GM12878 (cell line): ENCODE measurements at regions of chr6 and their contacts with region 1.

Region 1: GRCh38 chr6:151690768-151691562 is 116.5 kb upstream of the ESR1 start:
- DNase-seq: peak; percentile 83
- ATAC-seq: peak; percentile 97
- H3K4me3 ChIP-seq: peak overlapping the region; percentile 31; the same call in 1 of the 2 replicates
- H3K27ac ChIP-seq: no peak overlapping the region; the same call in 1 of the 2 replicates
- H3K4me1 ChIP-seq: peaks cover 17% of the 10 kb centered on the region
- H3K27me3 ChIP-seq: no peaks in the 10 kb centered on the region
- CTCF ChIP-seq: no peak
- EP300 ChIP-seq: peak; percentile 94 to 98
- POLR2A ChIP-seq: no peak
- RAD21 ChIP-seq: no peak

Region 2: DNA sequence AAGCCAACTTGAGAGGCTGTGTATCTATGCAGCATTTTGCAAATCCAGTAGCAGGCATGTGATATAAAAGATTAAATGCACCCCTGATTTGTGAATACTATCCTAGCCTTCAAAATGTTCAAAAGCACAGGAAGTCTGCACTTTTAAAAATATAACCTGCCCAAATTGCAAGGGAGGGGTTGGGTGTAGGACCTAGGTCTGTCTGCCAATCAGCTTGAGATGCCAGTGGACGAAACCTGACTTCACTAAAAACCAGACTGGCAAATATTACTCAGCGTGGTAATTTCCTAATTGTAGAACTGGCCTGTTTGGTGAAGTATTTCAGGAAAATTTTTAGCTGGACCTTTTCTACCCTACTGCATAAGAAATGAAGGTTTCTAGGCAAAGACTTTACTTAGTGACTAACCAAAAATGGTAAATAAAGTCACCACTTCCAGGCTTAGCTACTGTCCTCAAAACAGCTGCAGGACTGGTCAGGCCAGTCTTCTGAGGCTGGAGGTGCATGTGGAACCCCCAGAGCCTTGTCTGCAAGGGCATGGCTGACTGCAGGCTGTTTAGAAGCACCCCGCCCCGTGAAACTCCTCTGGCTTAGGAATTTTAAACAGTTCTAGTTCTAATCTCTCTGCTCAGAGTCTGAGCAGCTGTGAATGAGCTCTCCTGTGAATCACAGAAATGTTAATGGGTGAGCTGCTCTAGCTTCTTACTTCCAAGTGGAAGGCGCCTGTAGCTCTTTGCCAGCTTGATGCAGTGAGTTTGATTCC is 12.1 kb after region 1 on chr6:
- CTCF ChIA-PET with region 1: interaction called, 131 read pairs
- POLR2A ChIA-PET with region 1: interaction called, 29 read pairs
- RAD21 ChIA-PET with region 1: interaction called, 93 read pairs
- SMC1A ChIA-PET with region 1: interaction called, 138 read pairs
- in situ Hi-C with region 1: no loop called
- intact Hi-C with region 1: loop called (anchors 1 kb)
- DNase-seq: no peak
- ATAC-seq: peak; percentile 85
- H3K4me3 ChIP-seq: no peak overlapping the region
- H3K27ac ChIP-seq: no peak overlapping the region
- H3K4me1 ChIP-seq: peaks cover 8% of the 10 kb centered on the region
- H3K27me3 ChIP-seq: no peaks in the 10 kb centered on the region; a peak in 1 of 4 replicates
- CTCF ChIP-seq: no peak
- EP300 ChIP-seq: no peak
- POLR2A ChIP-seq: no peak
- RAD21 ChIP-seq: no peak

Region 3: DNA sequence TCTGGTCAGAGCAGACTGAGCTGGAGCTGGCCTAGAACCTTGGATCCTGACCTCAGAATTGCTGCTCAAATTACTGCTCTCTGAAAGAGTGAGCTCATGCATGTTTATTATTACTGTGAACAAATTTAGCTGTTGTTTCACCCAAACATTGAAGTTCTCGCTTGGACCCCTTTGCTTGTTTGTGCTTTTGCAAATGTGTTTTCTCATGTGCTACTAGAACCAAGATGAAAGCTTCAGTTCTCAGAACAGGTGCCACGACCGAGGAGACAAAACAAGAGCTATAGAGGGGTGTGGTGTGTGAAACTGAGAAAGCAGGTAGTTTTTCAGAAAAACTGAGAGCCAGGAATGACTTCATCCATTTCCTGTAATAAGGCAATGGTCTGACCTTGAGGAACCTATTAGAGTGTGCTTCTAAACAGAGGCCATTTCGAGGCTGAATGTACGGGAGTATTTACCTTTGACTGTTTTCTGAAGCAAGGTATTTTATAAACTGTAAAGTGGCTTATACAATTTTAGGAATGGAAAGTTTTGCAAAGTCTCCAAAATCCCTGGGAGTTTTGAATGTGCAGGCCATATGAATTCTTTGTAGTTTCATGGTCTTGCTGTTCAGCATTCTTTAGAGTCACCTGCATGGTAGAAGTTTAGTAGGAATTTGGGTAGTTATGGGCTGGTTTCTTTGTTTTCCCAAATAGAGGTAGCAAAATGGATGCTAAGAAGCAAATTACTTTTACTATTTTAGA is 66.7 kb after region 1 on chr6:
- CTCF ChIA-PET with region 1: interaction called, 28 read pairs
- POLR2A ChIA-PET with region 1: interaction called, 6 read pairs
- RAD21 ChIA-PET with region 1: interaction called, 43 read pairs
- SMC1A ChIA-PET with region 1: interaction called, 90 read pairs
- in situ Hi-C with region 1: no loop called
- intact Hi-C with region 1: no loop called
- DNase-seq: peak; percentile 69
- ATAC-seq: peak; percentile 97
- H3K4me3 ChIP-seq: no peak overlapping the region
- H3K27ac ChIP-seq: 0 out of 2 replicates have a peak overlapping the region, but pooled peaks have one; percentile 58
- H3K4me1 ChIP-seq: peaks cover 12% of the 10 kb centered on the region
- H3K27me3 ChIP-seq: no peaks in the 10 kb centered on the region
- CTCF ChIP-seq: no peak
- EP300 ChIP-seq: peak; percentile 34 to 57; a peak in 3 of 4 replicates
- POLR2A ChIP-seq: no peak
- RAD21 ChIP-seq: no peak

Region 4: DNA sequence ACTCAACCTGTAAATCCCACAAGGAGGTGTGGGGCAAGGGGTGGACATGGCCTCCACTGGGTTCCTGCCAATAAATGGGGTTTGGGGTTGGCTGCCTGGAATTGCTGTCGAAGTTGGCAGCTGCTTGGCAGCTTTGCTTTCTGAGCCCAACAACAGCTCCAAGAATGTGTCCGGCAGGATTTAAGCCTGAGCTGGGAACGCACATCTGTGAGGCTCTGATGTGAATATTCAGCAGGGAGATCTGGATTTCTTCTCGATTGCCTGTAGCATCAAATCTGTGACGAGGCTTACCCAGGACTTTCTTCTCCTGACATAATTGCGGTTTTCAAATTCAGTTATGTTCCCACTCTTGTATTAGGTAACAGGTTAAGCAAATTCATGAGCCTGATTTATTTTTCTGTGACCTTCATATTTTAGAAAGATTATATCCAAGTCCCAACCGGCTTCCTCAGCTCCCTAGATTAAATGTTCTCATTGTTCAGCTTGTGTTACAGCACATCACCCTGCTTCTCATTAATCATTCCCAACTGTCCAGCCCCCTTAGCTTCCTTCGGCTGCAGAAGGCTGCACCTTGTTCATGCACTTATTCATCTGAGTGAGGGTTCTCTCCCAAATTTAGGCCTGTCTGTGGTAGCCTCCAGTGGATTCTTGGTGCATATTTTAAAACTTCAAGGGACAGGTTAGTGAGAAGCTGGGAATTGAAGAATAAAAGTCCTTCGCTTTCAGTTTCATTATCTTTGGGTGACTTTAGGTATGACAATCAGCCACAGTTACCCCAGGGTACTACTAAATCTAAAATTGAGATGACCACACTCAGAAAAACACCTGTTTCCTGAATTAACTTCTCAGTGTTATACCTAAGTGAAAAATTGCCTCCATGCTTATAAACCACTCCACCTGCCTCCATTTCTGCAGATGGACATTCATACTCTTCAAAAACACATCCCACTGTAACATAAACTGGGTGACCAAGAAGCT is 426.5 kb after region 1 on chr6:
- CTCF ChIA-PET with region 1: interaction called, 157 read pairs
- POLR2A ChIA-PET with region 1: no interaction called
- RAD21 ChIA-PET with region 1: interaction called, 7 read pairs
- SMC1A ChIA-PET with region 1: interaction called, 131 read pairs
- in situ Hi-C with region 1: loop called (anchors 5 kb)
- intact Hi-C with region 1: no loop called
- DNase-seq: no peak
- ATAC-seq: peak; percentile 83
- H3K4me3 ChIP-seq: no peak overlapping the region
- H3K27ac ChIP-seq: no peak overlapping the region
- H3K4me1 ChIP-seq: 0 out of 2 replicates have a peak, but pooled peaks cover 4% of the 10 kb centered on the region
- H3K27me3 ChIP-seq: no peaks in the 10 kb centered on the region
- CTCF ChIP-seq: no peak
- EP300 ChIP-seq: no peak
- POLR2A ChIP-seq: no peak
- RAD21 ChIP-seq: no peak

Region 5: DNA sequence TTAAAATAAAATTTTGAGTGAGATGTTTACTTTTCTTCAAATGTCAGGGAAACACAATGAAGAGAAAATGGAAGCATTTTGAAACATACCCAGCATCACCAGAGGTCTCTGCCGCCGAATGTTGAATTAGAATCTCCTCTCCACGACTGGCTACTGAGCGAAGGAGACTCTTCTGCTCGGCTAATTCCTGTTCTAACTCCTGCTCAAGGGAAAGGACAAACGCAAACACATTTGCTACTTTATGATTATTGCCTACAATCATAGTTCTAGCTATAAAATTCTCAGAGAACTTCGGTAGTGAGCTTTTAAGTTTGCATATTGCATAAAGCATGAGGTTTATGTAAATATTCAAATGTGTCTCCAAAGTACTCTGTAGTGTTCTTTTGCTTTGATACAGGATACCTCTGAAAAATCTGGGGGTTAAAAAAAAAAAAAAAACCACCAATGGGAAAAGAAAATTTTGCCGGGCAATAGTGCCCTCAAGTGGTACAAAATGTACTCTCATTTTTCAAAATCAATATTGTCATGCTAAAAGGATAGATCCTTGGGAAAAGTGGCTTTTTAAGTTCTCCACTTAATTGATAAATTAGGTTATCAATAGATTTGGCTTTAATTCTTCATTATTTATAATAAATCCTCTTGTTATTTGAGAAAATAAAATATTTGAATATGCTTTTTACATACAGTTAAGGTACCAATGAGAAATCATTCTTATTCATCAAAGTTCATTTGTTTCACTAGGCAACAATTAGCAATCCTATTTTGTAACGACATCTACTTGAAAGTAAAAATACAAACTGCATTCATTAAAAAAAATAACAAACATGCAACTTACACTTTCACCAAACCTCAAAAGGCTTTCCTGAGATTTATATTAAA is 577.2 kb after region 1 on chr6:
- CTCF ChIA-PET with region 1: interaction called, 32 read pairs
- POLR2A ChIA-PET with region 1: no interaction called
- RAD21 ChIA-PET with region 1: interaction called, 24 read pairs
- SMC1A ChIA-PET with region 1: interaction called, 34 read pairs
- in situ Hi-C with region 1: no loop called
- intact Hi-C with region 1: loop called (anchors 1 kb)
- DNase-seq: no peak
- ATAC-seq: no peak
- H3K4me3 ChIP-seq: no peak overlapping the region
- H3K27ac ChIP-seq: no peak overlapping the region
- H3K4me1 ChIP-seq: peaks cover 9% of the 10 kb centered on the region; the same call in 1 of the 2 replicates
- H3K27me3 ChIP-seq: no peaks in the 10 kb centered on the region
- CTCF ChIP-seq: peak; percentile 24 to 61 (median 38); a peak in 3 of 6 replicates
- EP300 ChIP-seq: no peak
- POLR2A ChIP-seq: no peak
- RAD21 ChIP-seq: peak; percentile 79

Region 6: DNA sequence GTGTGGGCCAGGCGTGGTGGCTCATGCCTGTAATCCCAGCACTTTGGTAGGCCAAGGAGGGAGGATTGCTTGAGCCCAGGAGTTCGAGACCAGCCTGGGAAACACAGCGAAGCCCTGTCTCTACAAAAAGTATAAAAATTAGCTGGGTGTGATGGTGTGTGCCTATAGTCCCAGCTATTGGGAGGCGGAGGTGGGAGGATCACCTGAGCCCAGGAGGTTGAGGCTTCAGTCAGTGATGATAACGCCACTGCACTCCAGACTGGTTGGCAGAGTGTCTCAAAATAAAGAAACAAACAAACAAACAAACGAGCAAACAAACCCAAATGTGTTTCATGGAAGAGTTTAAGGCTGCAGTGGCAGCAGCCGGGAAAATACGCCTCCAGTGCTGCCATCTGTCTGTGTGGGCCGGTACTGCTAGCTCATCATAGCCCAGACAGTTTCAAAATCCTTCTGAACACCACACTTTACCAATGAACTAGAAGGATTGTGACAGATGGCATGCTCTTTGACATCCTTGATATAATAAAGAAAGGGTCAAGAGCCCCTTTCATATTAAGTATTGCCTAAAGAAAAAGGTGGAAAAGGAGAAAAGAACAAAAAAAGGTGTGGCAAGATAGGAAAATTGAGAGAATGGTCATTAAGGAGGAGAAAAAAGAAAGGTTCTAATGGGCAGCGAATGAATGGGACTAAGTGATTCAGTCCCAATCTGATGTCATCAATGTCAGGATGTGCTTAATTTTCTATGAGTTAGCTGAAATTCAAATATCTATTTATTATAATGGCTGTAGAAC is 647.6 kb after region 1 on chr6:
- CTCF ChIA-PET with region 1: interaction called, 25 read pairs
- POLR2A ChIA-PET with region 1: no interaction called
- RAD21 ChIA-PET with region 1: interaction called, 24 read pairs
- SMC1A ChIA-PET with region 1: interaction called, 21 read pairs
- in situ Hi-C with region 1: no loop called
- intact Hi-C with region 1: no loop called
- DNase-seq: no peak
- ATAC-seq: peak; percentile 93
- H3K4me3 ChIP-seq: no peak overlapping the region
- H3K27ac ChIP-seq: no peak overlapping the region
- H3K4me1 ChIP-seq: no peaks in the 10 kb centered on the region
- H3K27me3 ChIP-seq: no peaks in the 10 kb centered on the region; a peak in 1 of 4 replicates
- CTCF ChIP-seq: peak; percentile 85 to 93 (median 93)
- EP300 ChIP-seq: no peak
- POLR2A ChIP-seq: no peak
- RAD21 ChIP-seq: peak; percentile 71